ENCODE measurements at regions of chr6 and their contacts with region 1.

Region 1: DNA sequence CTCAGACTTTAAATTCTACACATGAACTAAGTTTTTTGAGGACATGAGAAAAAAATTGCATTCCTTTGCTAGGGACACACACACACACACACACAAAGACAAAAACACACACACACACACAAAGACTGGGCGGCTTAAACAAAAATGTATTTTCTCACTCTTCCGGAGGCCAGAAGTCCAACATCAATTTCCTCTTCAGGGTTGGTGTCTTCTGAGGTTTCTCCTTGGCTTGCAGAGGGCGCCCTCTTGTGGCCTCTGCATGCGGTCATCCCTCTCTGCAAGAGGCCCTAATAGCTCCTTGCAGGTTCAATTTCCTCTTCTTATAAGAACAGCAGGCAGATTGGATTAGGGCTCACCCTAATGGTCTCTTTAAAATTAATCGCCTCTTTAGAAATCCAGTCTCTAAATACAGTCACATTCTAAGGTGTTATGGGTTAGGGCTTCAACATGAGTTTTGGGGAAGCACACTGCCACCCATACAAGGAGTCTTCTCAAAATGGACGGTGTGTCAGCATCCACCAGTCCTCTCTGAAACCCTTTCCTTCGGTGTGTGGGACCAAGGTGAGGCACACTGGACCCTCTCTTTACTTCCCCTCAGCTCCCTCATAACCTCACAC is 61.4 kb downstream of the GPR6 start:
- DNase-seq: peak; percentile 90

Region 2: DNA sequence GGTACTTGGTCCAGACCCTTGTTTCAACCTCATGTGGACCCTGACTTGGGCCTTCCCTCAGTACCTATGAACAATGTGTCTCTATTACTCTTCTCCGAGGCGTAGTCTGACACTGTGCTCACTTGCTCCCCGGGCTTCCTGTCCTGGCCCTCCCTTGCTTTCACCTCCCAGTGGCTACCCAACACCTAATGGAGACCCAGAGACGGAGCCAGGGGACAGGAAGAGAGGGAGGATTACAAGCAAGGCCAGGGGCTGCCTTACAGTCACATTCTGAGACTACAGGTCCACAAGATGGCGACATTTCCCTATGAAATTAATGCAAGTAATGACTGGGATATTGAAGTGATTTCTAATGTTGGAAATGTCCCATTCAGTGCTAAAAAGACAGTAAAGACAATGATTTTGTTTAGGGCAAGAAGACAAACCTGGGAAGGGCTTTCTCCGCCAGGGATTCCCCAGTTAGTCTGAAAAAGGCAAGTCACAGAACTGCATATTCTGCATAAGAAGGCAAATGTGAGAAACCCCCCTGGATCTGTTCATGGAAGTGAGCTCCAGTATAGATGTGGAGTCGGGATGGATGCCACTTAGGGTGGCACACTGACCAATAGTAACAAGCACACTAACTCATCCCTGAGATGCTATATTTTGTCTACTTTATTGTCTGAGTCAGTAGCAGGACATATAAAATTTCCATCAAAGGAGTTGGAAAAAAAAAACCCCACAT is 512.4 kb before region 1 on chr6:
- intact Hi-C with region 1: loop called (anchors 5 kb)
- DNase-seq: no peak

Region 3: GRCh38 chr6:109705258-109705657 is 334.2 kb before region 1 on chr6:
- intact Hi-C with region 1: loop called (anchors 1 kb)
- DNase-seq: peak; percentile 85

Region 4: GRCh38 chr6:109793793-109794192 is 245.7 kb before region 1 on chr6:
- intact Hi-C with region 1: loop called (anchors 10 kb)
- DNase-seq: no peak

Region 5: GRCh38 chr6:110389689-110390382 is 350.4 kb after region 1 on chr6:
- intact Hi-C with region 1: loop called (anchors 5 kb)
- DNase-seq: no peak